MCF 10A (cell line): ENCODE measurements at regions of chr11 and their contacts with region 1.

Region 1: GRCh38 chr11:65779851-65780577 is 762 bp downstream of the AP5B1 start:
- DNase-seq: peak; percentile 78
- H3K4me3 Mint-ChIP-seq: peak overlapping the region; percentile 96
- H3K27ac Mint-ChIP-seq: peak overlapping the region; percentile 93
- H3K4me1 Mint-ChIP-seq: no peaks in the 10 kb centered on the region
- H3K27me3 Mint-ChIP-seq: no peaks in the 10 kb centered on the region
- CTCF ChIP-seq: peak; percentile 99

Region 2: DNA sequence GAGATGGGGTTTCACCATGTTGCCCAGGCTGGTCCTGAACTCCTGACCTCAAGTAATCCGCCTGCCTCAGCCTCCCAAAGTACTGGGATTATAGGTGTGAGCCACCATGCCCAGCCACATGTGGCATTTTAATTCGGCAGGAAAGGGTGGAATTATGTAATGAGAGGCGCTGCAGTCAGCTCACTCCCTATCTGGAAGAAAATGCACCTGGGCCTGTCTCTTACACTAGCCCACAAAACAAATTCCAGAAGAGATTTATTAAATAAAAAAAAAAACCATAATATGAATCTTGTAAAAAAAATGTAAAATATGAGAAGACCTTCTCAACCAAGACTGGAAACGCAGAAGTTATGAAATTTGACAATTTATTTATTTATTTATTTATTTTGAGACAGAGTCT is 76.2 kb before region 1 on chr11:
- CTCF ChIA-PET with region 1: interaction called, 15 read pairs
- POLR2A ChIA-PET with region 1: interaction called, 3 read pairs
- intact Hi-C with region 1: no loop called
- DNase-seq: no peak
- H3K4me3 Mint-ChIP-seq: no peak overlapping the region
- H3K27ac Mint-ChIP-seq: no peak overlapping the region
- H3K4me1 Mint-ChIP-seq: no peaks in the 10 kb centered on the region
- H3K27me3 Mint-ChIP-seq: peaks cover 44% of the 10 kb centered on the region
- CTCF ChIP-seq: no peak

Region 3: DNA sequence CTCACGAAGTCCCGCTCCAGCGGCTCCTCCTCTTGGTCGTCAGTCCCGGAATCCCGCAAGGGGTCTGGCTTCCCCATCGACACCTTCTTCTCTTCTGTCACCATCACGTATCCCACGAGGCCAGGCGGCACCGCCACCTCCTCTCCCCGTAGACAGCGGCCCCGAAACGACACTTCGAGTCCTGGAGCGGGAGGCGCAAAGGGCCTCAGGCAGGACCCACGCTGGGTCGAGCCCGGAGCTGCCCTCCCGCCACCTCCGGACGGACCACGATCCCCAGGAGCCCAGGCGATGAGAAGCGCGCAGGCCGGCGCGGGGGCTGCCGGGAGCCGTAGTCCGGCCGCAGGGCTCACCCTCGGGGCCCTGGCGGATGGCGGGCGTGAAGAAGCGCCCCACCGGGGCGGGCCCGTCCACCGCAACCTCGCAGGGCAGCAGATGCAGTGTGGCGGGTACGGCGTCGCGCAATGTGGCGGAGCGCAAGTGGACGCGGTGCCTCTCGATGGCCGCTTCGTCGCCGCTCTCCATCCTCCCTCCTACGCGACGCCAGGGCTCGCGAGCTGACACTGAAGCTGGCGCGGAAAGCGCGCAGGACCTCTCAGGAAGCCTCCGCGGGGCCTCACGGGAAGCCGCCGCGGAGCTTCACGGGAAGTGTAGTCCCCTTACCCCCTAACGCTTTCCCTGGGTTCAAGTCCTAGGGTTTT is 59.6 kb before region 1 on chr11 and contains the start of gene RNASEH2C:
- CTCF ChIA-PET with region 1: interaction called, 15 read pairs
- POLR2A ChIA-PET with region 1: interaction called, 27 read pairs
- intact Hi-C with region 1: no loop called
- DNase-seq: peak; percentile 86
- H3K4me3 Mint-ChIP-seq: peak within 1 kb of the TSS; percentile 97
- H3K27ac Mint-ChIP-seq: peak within 1 kb of the TSS; percentile 75
- H3K4me1 Mint-ChIP-seq: peaks cover 10% of the 10 kb centered on the region
- H3K27me3 Mint-ChIP-seq: no peaks in the 10 kb centered on the region
- CTCF ChIP-seq: no peak
- total RNA-seq, gene RNASEH2C: 27.4 and 35.7 TPM in 2 replicates

Region 4: GRCh38 chr11:65766535-65766934 is 13.5 kb before region 1 on chr11:
- CTCF ChIA-PET with region 1: interaction called, 32 read pairs
- POLR2A ChIA-PET with region 1: interaction called, 14 read pairs
- intact Hi-C with region 1: no loop called
- DNase-seq: peak; percentile 56
- H3K4me3 Mint-ChIP-seq: no peak overlapping the region
- H3K27ac Mint-ChIP-seq: no peak overlapping the region
- H3K4me1 Mint-ChIP-seq: peaks cover 23% of the 10 kb centered on the region
- H3K27me3 Mint-ChIP-seq: no peaks in the 10 kb centered on the region
- CTCF ChIP-seq: no peak

Region 5: DNA sequence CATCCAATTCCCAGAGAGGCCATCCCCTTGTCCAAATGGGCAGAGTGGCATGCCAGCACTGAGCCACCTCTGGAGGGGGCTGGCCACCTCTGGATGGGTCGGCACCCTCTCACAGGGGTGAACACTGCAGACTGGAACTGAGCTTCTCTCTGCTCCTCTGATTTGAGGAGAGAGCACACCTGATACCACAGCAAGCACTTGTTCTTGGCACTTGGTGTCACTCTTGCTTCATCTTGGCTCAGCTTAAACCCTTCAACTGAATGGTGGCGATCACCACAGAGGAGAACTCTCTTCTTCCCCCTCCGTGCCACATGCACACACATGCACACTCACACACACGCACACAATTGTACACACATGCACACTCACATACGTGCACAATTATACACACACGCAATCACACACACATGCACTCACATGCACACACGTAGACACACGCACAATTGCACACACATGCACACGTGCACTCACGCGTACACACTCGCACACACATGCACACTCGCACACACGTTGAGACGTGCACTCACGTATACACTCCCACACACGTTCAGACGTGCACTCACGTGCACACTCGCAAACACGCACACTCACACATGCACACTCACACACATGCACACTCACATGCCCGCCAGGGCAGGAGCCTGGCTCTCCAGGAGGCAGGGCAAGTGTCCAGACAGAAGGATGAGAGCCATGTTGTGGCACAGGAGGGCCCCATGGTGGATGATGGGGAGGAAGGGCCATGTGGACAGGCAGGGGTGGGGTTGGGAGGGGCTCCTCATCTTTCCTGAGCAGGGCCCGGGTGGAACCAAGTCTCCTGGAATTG is 30.2 kb after region 1 on chr11:
- CTCF ChIA-PET with region 1: interaction called, 98 read pairs
- POLR2A ChIA-PET with region 1: interaction called, 5 read pairs
- intact Hi-C with region 1: no loop called
- DNase-seq: peak; percentile 30
- H3K4me3 Mint-ChIP-seq: no peak overlapping the region
- H3K27ac Mint-ChIP-seq: no peak overlapping the region
- H3K4me1 Mint-ChIP-seq: peaks cover 4% of the 10 kb centered on the region
- H3K27me3 Mint-ChIP-seq: peaks cover 14% of the 10 kb centered on the region
- CTCF ChIP-seq: no peak

Region 6: DNA sequence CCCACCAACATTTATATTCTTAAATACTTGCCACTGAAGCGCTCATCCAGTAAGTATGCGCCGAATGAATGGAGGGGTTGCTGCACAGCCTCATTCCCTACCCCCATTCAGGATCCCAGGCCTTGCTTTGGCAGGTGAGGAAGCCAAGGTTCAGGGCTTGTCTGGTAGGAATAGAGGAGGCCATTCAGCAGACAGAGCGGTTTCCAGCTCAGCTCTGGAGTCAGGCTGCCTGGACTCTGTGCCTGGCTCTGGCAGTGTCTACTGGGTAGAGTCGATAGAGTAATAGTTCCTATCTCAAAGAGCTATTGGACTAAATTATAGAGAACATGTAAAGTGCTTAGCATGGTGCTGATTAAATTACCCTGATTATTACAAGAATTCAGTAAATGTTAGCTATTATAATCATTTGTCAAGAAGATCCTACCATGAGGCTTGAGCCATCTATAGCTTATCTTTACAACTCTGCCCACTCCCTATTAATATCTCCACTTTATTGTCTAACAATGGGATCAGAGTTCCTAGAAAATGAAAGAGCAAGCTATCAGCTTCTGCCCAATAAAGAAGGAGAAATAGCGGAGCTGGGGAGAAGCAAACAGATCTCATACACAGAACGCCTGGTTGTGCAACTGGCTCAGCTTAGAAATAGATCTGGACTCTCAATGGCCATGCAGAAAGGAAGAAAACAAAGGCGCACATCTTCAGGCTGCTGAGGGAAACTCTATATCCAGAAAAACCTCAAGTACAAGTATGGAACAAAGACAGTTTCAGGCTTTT is 47.1 kb after region 1 on chr11:
- CTCF ChIA-PET with region 1: interaction called, 11 read pairs
- POLR2A ChIA-PET with region 1: no interaction called
- intact Hi-C with region 1: no loop called
- DNase-seq: no peak
- H3K4me3 Mint-ChIP-seq: no peak overlapping the region
- H3K27ac Mint-ChIP-seq: no peak overlapping the region
- H3K4me1 Mint-ChIP-seq: no peaks in the 10 kb centered on the region
- H3K27me3 Mint-ChIP-seq: peaks cover 32% of the 10 kb centered on the region
- CTCF ChIP-seq: no peak

Region 7: DNA sequence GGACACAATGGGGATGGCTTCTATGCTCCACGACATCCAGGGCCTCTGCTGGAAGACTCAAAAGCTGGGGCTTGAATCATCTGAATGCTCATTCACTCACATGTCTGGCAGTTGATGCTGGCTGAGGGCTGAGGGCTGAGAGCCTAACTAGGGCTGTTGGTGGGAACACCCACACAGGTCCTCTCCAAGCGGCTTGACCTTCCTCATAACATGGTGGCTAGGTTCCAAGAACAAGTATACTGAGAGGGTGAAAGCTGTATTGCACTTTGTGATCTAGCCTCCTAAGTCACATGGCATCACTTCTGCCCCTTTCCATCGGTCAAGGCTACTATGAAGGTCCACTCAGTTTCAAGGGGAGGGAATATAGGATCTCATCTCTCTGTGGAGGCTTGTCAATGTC is 519.2 kb after region 1 on chr11:
- CTCF ChIA-PET with region 1: no interaction called
- POLR2A ChIA-PET with region 1: no interaction called
- intact Hi-C with region 1: no loop called
- DNase-seq: no peak
- H3K4me3 Mint-ChIP-seq: no peak overlapping the region
- H3K27ac Mint-ChIP-seq: no peak overlapping the region
- H3K4me1 Mint-ChIP-seq: no peaks in the 10 kb centered on the region
- H3K27me3 Mint-ChIP-seq: no peaks in the 10 kb centered on the region
- CTCF ChIP-seq: no peak